GM12878 (cell line): ENCODE measurements at regions of chr12 and their contacts with region 1.

Region 1: DNA sequence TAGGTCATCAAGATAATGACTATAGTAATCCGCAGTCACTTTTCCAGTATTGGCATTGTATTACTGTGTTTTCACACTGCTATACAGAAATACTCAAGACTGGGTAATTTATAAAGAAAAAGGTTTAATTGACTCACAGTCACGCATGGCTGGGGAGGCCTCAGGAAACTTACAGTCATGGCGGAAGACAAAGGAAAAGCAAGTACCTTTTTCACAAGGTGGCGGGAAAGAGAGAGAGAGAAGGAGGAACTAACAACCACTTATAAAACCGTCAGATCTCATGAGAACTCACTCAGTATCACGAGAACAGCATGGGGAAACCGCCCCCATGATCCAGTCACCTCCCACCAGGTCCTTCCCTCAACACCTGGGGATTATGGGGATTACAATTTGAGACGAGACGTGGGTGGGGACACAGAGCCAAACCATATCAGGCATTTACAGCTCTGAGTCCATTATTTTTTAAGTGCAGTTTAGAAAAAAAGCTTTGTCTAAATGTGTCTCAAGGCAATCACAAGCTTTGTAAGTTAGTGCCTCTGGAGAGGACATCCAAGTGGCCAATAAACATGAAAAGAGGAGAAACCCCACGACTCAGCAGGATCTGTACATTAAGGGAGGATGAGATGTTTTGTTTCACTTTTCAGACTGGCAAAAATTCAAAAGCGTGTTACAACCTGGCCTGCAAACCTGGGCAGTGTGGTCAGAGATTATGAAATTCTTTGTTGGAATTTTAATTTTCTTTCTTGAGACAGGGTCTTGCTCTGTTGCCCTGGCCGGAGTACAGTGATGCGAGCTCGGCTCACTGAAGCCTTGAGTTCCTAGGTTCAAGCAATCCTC is 82.0 kb downstream of the DNAH10 start:
- DNase-seq: no peak
- ATAC-seq: no peak
- H3K4me3 ChIP-seq: no peak overlapping the region
- H3K27ac ChIP-seq: no peak overlapping the region
- H3K4me1 ChIP-seq: peaks cover 7% of the 10 kb centered on the region; the same call in 1 of the 2 replicates
- H3K27me3 ChIP-seq: no peaks in the 10 kb centered on the region
- CTCF ChIP-seq: no peak
- EP300 ChIP-seq: no peak
- POLR2A ChIP-seq: no peak
- RAD21 ChIP-seq: no peak

Region 2: GRCh38 chr12:123801573-123802178 is 42.5 kb before region 1 on chr12:
- CTCF ChIA-PET with region 1: interaction called, 4 read pairs
- POLR2A ChIA-PET with region 1: no interaction called
- RAD21 ChIA-PET with region 1: interaction called, 3 read pairs
- SMC1A ChIA-PET with region 1: interaction called, 6 read pairs
- in situ Hi-C with region 1: no loop called
- intact Hi-C with region 1: loop called (anchors 1 kb)
- DNase-seq: no peak
- ATAC-seq: peak; percentile 41; the same call in 1 of the 3 replicates
- H3K4me3 ChIP-seq: no peak overlapping the region
- H3K27ac ChIP-seq: no peak overlapping the region
- H3K4me1 ChIP-seq: no peaks in the 10 kb centered on the region
- H3K27me3 ChIP-seq: no peaks in the 10 kb centered on the region
- CTCF ChIP-seq: peak; percentile 41 to 55 (median 48); a peak in 5 of 6 replicates
- EP300 ChIP-seq: no peak
- POLR2A ChIP-seq: no peak
- RAD21 ChIP-seq: peak; percentile 78